ENCODE measurements at regions of chr18 and their contacts with region 1.

Region 1: GRCh38 chr18:3995476-3996102 is 459.5 kb downstream of the DLGAP1 start:
- DNase-seq: peak; percentile 31
- CTCF ChIP-seq: peak; percentile 68

Region 2: DNA sequence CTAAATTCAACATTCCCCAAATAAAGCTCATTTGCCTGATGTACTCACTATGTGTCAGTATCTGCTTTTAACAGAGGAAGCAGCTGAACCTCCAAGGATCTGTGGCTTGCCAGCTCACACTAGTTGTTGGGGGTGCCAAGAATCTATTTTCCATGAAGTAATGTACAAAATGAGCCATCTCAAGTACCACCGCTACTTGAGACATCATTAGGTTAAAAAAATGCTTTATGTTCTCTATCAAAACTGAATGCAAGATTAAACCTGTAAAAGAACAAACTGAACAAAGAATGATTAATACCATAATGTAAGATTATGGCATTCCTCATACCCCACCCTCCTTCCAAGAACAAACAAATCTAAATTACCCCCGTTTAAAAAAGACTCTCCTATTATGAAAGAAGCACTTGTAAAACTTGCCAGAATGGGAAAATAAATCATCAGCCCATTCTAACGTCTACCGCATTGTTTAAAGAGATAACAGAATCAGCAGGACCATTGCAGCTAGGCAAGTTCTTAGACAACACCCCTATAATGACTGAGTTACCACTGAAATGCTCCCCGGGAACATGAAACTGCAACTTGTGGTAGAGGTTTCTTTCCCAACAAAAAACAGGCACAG is 12.1 kb before region 1 on chr18:
- CTCF ChIA-PET with region 1: interaction called, 41 read pairs
- POLR2A ChIA-PET with region 1: no interaction called
- DNase-seq: no peak
- CTCF ChIP-seq: no peak

Region 3: GRCh38 chr18:4040391-4041092 is 45.0 kb after region 1 on chr18:
- CTCF ChIA-PET with region 1: no interaction called
- POLR2A ChIA-PET with region 1: no interaction called
- DNase-seq: no peak
- CTCF ChIP-seq: no peak